A673 (cell line): ENCODE measurements at regions of chr6 and their contacts with region 1.

Region 1: GRCh38 chr6:143842902-143843676 is at the start of gene LTV1:
- DNase-seq: peak; percentile 97
- H3K4me3 ChIP-seq: peak within 1 kb of the TSS; percentile 68
- H3K27ac ChIP-seq: peak within 1 kb of the TSS; percentile 86
- H3K4me1 ChIP-seq: peaks cover 4% of the 10 kb centered on the region
- H3K27me3 ChIP-seq: no peaks in the 10 kb centered on the region
- CTCF ChIP-seq: no peak
- total RNA-seq, gene LTV1: 44.1 and 51.8 TPM in 2 replicates

Region 2: GRCh38 chr6:143677891-143678791 is 164.9 kb before region 1 on chr6 and contains the start of gene PHACTR2:
- CTCF ChIA-PET with region 1: no interaction called
- POLR2A ChIA-PET with region 1: no interaction called
- intact Hi-C with region 1: loop called (anchors 10 kb)
- DNase-seq: peak; percentile 64
- H3K4me3 ChIP-seq: peak within 1 kb of the TSS; percentile 54
- H3K27ac ChIP-seq: no peak within 1 kb of the TSS
- H3K4me1 ChIP-seq: peaks cover 5% of the 10 kb centered on the region
- H3K27me3 ChIP-seq: peaks cover 54% of the 10 kb centered on the region
- CTCF ChIP-seq: no peak
- total RNA-seq, gene PHACTR2: 2.4 and 3.8 TPM in 2 replicates

Region 3: GRCh38 chr6:144104898-144105487 is 261.9 kb after region 1 on chr6:
- CTCF ChIA-PET with region 1: no interaction called
- POLR2A ChIA-PET with region 1: no interaction called
- intact Hi-C with region 1: no loop called
- DNase-seq: peak; percentile 85
- H3K4me3 ChIP-seq: no peak overlapping the region
- H3K27ac ChIP-seq: no peak overlapping the region
- H3K4me1 ChIP-seq: no peaks in the 10 kb centered on the region
- H3K27me3 ChIP-seq: no peaks in the 10 kb centered on the region
- CTCF ChIP-seq: peak; percentile 73